Heart right ventricle (tissue), 16 donors: ENCODE measurements at regions of chr3 and their contacts with region 1.

Region 1: DNA sequence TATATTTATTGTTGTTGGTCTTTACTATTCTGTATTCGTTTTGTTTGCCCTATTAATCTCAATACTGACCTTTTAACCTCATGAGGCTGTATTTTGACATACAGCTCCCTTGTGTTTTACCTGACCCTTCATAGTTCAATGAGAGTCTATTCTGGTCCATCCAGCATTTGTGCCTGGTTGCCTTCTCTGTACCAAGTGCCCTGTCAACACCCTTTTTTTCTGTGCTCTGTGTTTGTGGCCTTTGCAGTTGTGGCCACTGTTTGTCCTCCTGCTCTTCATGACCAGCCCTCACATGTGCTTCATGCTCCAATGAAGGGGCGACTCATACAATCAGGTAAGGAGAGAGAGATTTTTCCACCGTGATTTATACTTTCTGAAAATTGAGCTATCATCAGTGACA is 368.2 kb downstream of the IL20RB start:
- DNase-seq: no peak
- ATAC-seq: peak in 1 of 8 donors; percentile 62
- H3K4me3 ChIP-seq: no peak overlapping the region
- H3K27ac ChIP-seq: no peak overlapping the region
- H3K4me1 ChIP-seq: no peaks in the 10 kb centered on the region
- H3K27me3 ChIP-seq: peaks cover 0 to 4% (median 0%) of the 10 kb centered on the region in 7 donors
- CTCF ChIP-seq: no peak

Region 2: GRCh38 chr3:137264843-137265330 is 61.0 kb before region 1 on chr3:
- intact Hi-C with region 1: loop called in 1 of 10 experiments (anchors 2 kb)
- DNase-seq: no peak
- ATAC-seq: no peak
- H3K4me3 ChIP-seq: no peak overlapping the region
- H3K27ac ChIP-seq: no peak overlapping the region
- H3K4me1 ChIP-seq: peaks cover 0 to 11% (median 5%) of the 10 kb centered on the region in 9 donors
- H3K27me3 ChIP-seq: no peaks in the 10 kb centered on the region
- CTCF ChIP-seq: no peak